Transverse colon (tissue), 4 donors: ENCODE measurements at regions of chr3 and their contacts with region 1.

Region 1: GRCh38 chr3:111859974-111860859 is 1.2 kb downstream of the PHLDB2 start:
- DNase-seq: peak; percentile 71
- H3K4me3 ChIP-seq: peak overlapping the region; percentile 55 to 76 (median 62)
- H3K27ac ChIP-seq: peak overlapping the region; percentile 88 to 92 (median 91)
- H3K4me1 ChIP-seq: peaks cover 0 to 34% (median 13%) of the 10 kb centered on the region in 4 donors
- H3K27me3 ChIP-seq: peaks cover 10% of the 10 kb centered on the region
- CTCF ChIP-seq: peak; percentile 35 to 61 (median 53)
- EP300 ChIP-seq: no peak
- POLR2A ChIP-seq: peak; percentile 40

Region 2: DNA sequence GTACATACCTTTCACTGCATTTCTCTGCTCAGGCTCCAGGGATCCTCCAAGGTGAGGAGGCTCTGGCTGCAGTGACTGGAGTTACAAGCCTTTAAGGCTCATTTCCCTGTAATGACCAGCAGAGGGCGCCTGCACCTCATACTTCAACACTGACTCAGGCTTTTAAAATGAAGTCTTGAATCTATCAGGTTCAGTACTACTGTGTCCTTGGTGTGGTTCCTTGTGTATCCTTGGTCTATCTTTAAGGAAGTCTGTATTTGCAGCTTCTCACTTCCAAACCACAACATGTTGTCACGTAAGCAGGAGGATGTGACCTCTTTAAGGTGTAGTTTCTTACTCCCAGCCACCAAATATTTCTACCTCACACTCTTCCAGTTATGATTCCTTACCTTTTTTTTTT is 142.6 kb before region 1 on chr3:
- in situ Hi-C with region 1: loop called in 1 of 4 experiments (anchors 10 kb)
- intact Hi-C with region 1: loop called (anchors 2 kb)
- DNase-seq: peak; percentile 75
- H3K4me3 ChIP-seq: no peak overlapping the region
- H3K27ac ChIP-seq: peak overlapping the region in 1 of 4 donors; percentile 24
- H3K4me1 ChIP-seq: peaks cover 0 to 3% (median 0%) of the 10 kb centered on the region in 4 donors
- H3K27me3 ChIP-seq: no peaks in the 10 kb centered on the region
- CTCF ChIP-seq: peak; percentile 87 to 98 (median 94)
- EP300 ChIP-seq: no peak
- POLR2A ChIP-seq: no peak

Region 3: GRCh38 chr3:111723293-111724215 is 136.7 kb before region 1 on chr3:
- in situ Hi-C with region 1: loop called in 1 of 4 experiments (anchors 10 kb)
- intact Hi-C with region 1: no loop called
- DNase-seq: no peak
- H3K4me3 ChIP-seq: no peak overlapping the region
- H3K27ac ChIP-seq: no peak overlapping the region
- H3K4me1 ChIP-seq: no peaks in the 10 kb centered on the region
- H3K27me3 ChIP-seq: no peaks in the 10 kb centered on the region
- CTCF ChIP-seq: no peak
- EP300 ChIP-seq: no peak
- POLR2A ChIP-seq: no peak

Region 4: DNA sequence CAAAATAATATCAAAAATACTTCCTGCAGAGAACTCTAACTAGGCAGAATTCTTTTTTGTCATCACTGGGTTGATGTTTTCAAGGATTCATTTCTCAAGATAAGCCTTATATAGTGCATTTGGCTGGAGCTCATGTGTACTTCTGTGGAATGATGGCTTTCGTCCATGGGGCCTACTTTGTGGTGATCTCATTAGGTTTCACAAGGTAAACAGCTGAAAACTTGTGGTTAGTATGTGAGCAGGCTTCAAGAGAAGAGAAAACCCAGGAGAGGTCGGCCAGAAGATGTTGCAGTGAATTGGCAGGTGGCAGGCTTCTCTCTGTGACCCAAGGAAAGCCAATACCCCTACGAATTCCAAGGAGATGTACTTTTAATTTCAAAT is 122.5 kb before region 1 on chr3:
- in situ Hi-C with region 1: no loop called
- intact Hi-C with region 1: loop called (anchors 5 kb)
- DNase-seq: peak; percentile 17
- H3K4me3 ChIP-seq: no peak overlapping the region
- H3K27ac ChIP-seq: peak overlapping the region; percentile 60 to 72 (median 66)
- H3K4me1 ChIP-seq: peaks cover 0 to 33% (median 14%) of the 10 kb centered on the region in 4 donors
- H3K27me3 ChIP-seq: no peaks in the 10 kb centered on the region
- CTCF ChIP-seq: no peak
- EP300 ChIP-seq: no peak
- POLR2A ChIP-seq: no peak

Region 5: GRCh38 chr3:111967651-111968274 is 107.5 kb after region 1 on chr3:
- in situ Hi-C with region 1: no loop called
- intact Hi-C with region 1: loop called (anchors 5 kb)
- DNase-seq: peak; percentile 85
- H3K4me3 ChIP-seq: no peak overlapping the region
- H3K27ac ChIP-seq: peak overlapping the region; percentile 16 to 55 (median 30)
- H3K4me1 ChIP-seq: peaks cover 0 to 8% (median 2%) of the 10 kb centered on the region in 4 donors
- H3K27me3 ChIP-seq: no peaks in the 10 kb centered on the region
- CTCF ChIP-seq: peak; percentile 87 to 94 (median 92)
- EP300 ChIP-seq: no peak
- POLR2A ChIP-seq: no peak